ENCODE measurements at regions of chr3 and their contacts with region 1.

Region 1: GRCh38 chr3:50121416-50122032 is 32.8 kb downstream of the RBM5 start:
- DNase-seq: peak; percentile 77 to 91
- ATAC-seq: peak; percentile 78 to 91
- H3K4me3 ChIP-seq: no peak overlapping the region
- H3K27ac ChIP-seq: no peak overlapping the region
- H3K4me1 ChIP-seq: peaks cover 20% of the 10 kb centered on the region
- CTCF ChIP-seq: peak; percentile 74
- EP300 ChIP-seq: no peak
- POLR2A ChIP-seq: no peak
- RAD21 ChIP-seq: peak; percentile 83 to 90

Region 2: GRCh38 chr3:50138266-50139200 is 17.0 kb after region 1 on chr3:
- CTCF ChIA-PET with region 1: interaction called, 70 read pairs
- POLR2A ChIA-PET with region 1: no interaction called
- DNase-seq: no peak
- ATAC-seq: no peak
- H3K4me3 ChIP-seq: no peak overlapping the region
- H3K27ac ChIP-seq: no peak overlapping the region
- H3K4me1 ChIP-seq: no peaks in the 10 kb centered on the region
- CTCF ChIP-seq: no peak
- EP300 ChIP-seq: no peak
- POLR2A ChIP-seq: no peak
- RAD21 ChIP-seq: no peak

Region 3: DNA sequence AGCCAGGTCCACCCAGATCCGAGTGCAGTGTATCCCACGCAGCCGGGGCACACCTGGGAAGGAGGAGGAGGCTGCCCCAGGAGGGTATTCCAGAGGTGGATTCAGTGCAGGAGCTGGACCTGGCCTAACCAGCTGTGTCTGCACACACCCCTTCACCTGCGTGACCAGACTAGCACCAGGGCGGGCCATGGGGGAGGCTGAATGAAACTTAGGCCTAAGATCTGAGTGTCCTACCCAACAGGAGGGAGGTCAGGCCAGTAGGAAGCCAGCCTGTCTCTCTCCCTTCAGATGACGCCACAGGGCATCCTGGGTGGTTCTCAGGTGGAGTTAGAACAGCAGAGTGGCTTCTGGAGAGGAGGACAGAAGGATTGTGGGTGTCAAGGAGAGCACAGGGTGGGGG is 30.2 kb after region 1 on chr3:
- CTCF ChIA-PET with region 1: interaction called, 10 read pairs
- POLR2A ChIA-PET with region 1: no interaction called
- DNase-seq: no peak
- ATAC-seq: no peak
- H3K4me3 ChIP-seq: no peak overlapping the region
- H3K27ac ChIP-seq: no peak overlapping the region
- H3K4me1 ChIP-seq: peaks cover 13% of the 10 kb centered on the region; the same call in 2 of the 3 replicates
- CTCF ChIP-seq: no peak
- EP300 ChIP-seq: no peak
- POLR2A ChIP-seq: no peak
- RAD21 ChIP-seq: no peak

Region 4: DNA sequence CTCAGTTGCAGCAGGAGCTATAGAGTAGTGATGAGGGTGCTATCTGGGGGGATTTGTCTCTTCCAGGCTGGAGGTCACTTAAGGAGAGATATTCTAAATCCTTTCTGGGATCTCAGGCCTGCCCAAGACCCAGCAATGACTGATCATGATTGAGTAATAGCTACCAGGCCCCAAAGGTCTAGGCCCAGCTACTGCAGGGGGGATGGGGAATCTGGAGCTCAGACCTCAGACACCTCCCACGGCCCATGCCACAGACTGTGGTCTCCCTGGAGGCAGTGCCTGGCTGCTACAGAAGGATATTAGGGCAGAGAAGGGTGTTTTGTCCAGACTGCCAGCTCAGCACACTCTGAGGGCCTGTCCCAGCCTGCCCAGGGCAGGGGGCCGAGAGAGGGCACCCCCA is 90.4 kb after region 1 on chr3:
- CTCF ChIA-PET with region 1: interaction called, 11 read pairs
- POLR2A ChIA-PET with region 1: no interaction called
- DNase-seq: no peak
- ATAC-seq: no peak
- H3K4me3 ChIP-seq: no peak overlapping the region
- H3K27ac ChIP-seq: peak overlapping the region in 1 of 2 experiments; percentile 57; a peak in 2 of 6 replicates
- H3K4me1 ChIP-seq: no peaks in the 10 kb centered on the region
- CTCF ChIP-seq: no peak
- EP300 ChIP-seq: no peak
- POLR2A ChIP-seq: no peak
- RAD21 ChIP-seq: no peak

Region 5: DNA sequence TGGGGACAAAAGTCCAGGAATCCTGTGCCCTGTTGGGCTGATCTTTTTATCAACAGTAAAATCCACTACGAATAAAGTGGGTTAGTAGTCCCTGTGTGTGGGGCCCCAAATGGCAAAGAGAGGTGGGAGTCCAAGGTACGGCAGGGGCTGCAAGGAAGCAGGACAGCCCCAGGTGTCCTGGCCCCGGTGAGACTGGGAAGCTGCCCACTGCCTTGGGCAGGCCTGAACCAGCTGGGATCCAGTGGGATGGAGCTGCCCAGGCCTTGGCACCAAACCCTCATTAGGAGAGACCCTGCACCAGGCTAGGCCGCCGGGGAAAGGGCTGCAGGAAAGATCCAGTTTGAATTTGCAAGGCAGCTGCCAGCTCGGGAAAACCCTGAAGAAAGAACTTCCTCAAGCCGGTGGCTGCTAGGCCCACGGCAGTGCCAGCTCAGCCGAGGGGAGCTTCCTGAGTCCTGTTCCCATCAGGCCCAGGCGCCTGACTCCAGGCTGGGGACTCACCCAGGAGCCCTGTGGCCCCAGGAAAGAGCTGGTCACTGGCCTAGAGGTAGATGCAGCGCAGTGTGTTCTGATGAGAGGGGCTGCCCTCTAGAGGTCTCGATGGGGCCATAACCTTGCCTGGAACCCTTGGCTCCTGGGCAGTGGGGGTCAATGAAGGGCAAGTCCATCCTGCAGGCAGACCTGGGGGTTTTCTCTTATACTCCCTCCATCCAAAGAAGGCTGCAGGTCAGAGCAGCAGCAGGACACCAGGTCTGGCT is 100.1 kb after region 1 on chr3:
- CTCF ChIA-PET with region 1: interaction called, 54 read pairs
- POLR2A ChIA-PET with region 1: interaction called, 3 read pairs
- DNase-seq: no peak
- ATAC-seq: no peak
- H3K4me3 ChIP-seq: no peak overlapping the region
- H3K27ac ChIP-seq: no peak overlapping the region
- H3K4me1 ChIP-seq: 0 out of 3 replicates have a peak, but pooled peaks cover 3% of the 10 kb centered on the region
- CTCF ChIP-seq: no peak
- EP300 ChIP-seq: no peak
- POLR2A ChIP-seq: no peak
- RAD21 ChIP-seq: no peak

Measured in A549 (cell line).